ENCODE measurements at regions of chr10 and their contacts with region 1.

Region 1: DNA sequence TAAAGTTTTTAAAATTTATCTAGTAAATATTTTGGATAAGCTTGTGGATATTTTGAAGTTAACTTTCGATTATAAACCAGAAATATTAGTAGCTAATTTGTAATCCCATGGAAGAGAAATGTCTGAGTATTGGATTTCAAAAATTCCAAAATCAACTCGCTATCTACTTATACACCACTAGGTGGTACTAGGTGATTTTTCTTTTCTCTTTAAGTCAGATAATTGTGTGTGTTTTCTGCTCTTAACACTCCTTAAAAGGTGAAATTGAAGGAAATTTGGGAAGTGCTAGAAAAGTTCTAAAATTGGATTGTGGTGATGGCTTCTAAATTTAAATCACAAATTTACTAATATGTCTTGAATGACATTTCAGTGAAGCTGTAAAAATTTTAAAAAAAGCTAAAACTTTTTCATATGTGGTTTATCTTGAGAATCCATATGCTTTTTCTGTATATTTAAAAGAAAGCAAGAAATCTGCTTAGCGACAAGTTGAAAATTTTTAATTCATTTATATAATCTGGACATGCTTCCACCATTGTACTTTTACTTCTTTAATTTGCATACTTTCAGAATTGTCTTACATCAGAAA is 90.2 kb downstream of the IPMK start:
- DNase-seq: peak; percentile 47
- ATAC-seq: no peak; the same call in 1 of the 2 replicates
- H3K4me3 ChIP-seq: no peak overlapping the region
- H3K27ac ChIP-seq: no peak overlapping the region
- H3K4me1 ChIP-seq: no peaks in the 10 kb centered on the region
- H3K27me3 ChIP-seq: no peaks in the 10 kb centered on the region
- CTCF ChIP-seq: peak; percentile 74
- POLR2A ChIP-seq: no peak
- RAD21 ChIP-seq: peak; percentile 70

Region 2: DNA sequence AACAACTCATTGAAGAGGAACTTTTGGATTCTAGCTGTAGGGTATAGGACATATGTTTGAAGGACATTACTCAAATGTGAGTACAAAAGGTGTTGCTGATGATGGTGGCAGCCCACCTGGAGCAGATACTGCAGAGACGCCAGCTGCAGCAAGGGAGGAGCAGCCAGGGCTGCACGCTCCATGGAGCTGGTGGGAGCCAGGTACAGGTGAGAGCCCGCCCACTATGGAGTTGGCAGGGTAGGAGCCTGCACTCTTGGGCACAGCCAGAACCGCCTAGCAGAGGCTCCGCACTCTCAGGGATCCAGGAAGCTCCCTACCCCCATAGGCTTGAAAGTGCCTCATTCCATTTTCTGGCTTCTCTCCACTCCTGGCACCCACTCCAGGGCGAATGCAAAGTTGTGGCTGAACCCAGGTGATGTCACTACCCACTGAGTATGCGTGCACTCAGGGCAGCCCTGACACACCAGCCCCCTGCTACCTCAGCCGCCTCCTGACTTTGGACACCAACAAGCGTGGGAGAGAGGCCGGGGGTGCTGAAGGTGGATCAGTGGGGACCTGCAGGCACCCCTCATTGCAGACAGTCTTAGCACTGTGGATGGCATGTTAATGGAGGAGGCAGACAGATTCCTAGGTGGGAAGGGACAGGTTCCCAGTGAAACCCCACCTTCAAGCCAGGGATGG is 670.9 kb before region 1 on chr10:
- CTCF ChIA-PET with region 1: no interaction called
- POLR2A ChIA-PET with region 1: no interaction called
- dilution Hi-C with region 1: no loop called
- in situ Hi-C with region 1: no loop called
- intact Hi-C with region 1: no loop called
- DNase-seq: no peak
- ATAC-seq: no peak
- H3K4me3 ChIP-seq: no peak overlapping the region
- H3K27ac ChIP-seq: no peak overlapping the region
- H3K4me1 ChIP-seq: no peaks in the 10 kb centered on the region
- H3K27me3 ChIP-seq: no peaks in the 10 kb centered on the region
- CTCF ChIP-seq: no peak
- POLR2A ChIP-seq: no peak
- RAD21 ChIP-seq: no peak

Region 3: GRCh38 chr10:57769298-57769697 is 408.2 kb before region 1 on chr10:
- CTCF ChIA-PET with region 1: no interaction called
- POLR2A ChIA-PET with region 1: no interaction called
- dilution Hi-C with region 1: no loop called
- in situ Hi-C with region 1: no loop called
- intact Hi-C with region 1: no loop called
- DNase-seq: no peak
- ATAC-seq: no peak
- H3K4me3 ChIP-seq: no peak overlapping the region
- H3K27ac ChIP-seq: no peak overlapping the region
- H3K4me1 ChIP-seq: no peaks in the 10 kb centered on the region
- H3K27me3 ChIP-seq: no peaks in the 10 kb centered on the region
- CTCF ChIP-seq: no peak
- POLR2A ChIP-seq: no peak
- RAD21 ChIP-seq: no peak

Region 4: DNA sequence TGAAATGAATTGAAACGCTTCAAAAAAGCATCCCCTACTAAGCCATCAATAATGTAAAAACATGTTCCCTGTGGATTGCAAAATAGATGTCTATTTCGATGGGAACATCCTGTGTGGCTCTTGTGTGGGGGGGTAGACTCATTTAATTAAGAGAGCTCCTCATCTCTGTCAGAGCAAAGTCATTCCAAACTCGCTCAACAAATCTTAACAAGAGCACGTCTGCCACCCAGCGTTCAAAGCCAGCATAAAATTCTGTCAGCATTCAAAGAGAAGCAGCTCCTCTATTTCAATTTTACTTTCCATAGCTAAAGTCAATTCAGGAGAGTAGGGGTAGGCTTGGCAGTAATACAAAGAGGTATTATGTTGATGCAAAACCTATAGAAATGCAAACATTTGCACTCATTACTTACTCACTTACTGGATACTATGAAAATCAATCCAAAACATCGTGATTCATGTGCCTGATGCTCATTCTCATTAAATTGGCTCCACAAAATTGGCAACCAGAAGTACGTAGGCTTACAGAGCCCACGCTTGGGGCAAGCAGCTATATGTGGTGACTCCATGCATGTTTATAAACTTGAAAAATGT is 24.7 kb before region 1 on chr10:
- CTCF ChIA-PET with region 1: no interaction called
- POLR2A ChIA-PET with region 1: no interaction called
- dilution Hi-C with region 1: no loop called
- in situ Hi-C with region 1: no loop called
- intact Hi-C with region 1: loop called (anchors 1 kb)
- DNase-seq: peak; percentile 53
- ATAC-seq: peak; percentile 58; the same call in 1 of the 2 replicates
- H3K4me3 ChIP-seq: no peak overlapping the region
- H3K27ac ChIP-seq: no peak overlapping the region
- H3K4me1 ChIP-seq: no peaks in the 10 kb centered on the region
- H3K27me3 ChIP-seq: peaks cover 6% of the 10 kb centered on the region
- CTCF ChIP-seq: peak; percentile 60
- POLR2A ChIP-seq: no peak
- RAD21 ChIP-seq: peak; percentile 50

Region 5: GRCh38 chr10:58268870-58269605 is 91.6 kb after region 1 on chr10 and contains the start of gene CISD1:
- CTCF ChIA-PET with region 1: no interaction called
- POLR2A ChIA-PET with region 1: interaction called, 3 read pairs
- dilution Hi-C with region 1: no loop called
- in situ Hi-C with region 1: no loop called
- intact Hi-C with region 1: loop called (anchors 2 kb)
- DNase-seq: peak; percentile 100
- ATAC-seq: peak; percentile 80
- H3K4me3 ChIP-seq: peak within 1 kb of the TSS; percentile 64
- H3K27ac ChIP-seq: peak within 1 kb of the TSS; percentile 57
- H3K4me1 ChIP-seq: no peaks in the 10 kb centered on the region
- H3K27me3 ChIP-seq: no peaks in the 10 kb centered on the region
- CTCF ChIP-seq: no peak
- POLR2A ChIP-seq: peak; percentile 57; the same call in 1 of the 2 replicates
- RAD21 ChIP-seq: no peak
- total RNA-seq, gene CISD1: 25.8 and 34.6 TPM in 2 replicates

Region 6: GRCh38 chr10:58291538-58292174 is 114.2 kb after region 1 on chr10:
- CTCF ChIA-PET with region 1: interaction called, 41 read pairs
- POLR2A ChIA-PET with region 1: interaction called, 3 read pairs
- dilution Hi-C with region 1: no loop called
- in situ Hi-C with region 1: no loop called
- intact Hi-C with region 1: loop called (anchors 1 kb)
- DNase-seq: peak; percentile 71
- ATAC-seq: peak; percentile 86
- H3K4me3 ChIP-seq: no peak overlapping the region
- H3K27ac ChIP-seq: no peak overlapping the region
- H3K4me1 ChIP-seq: peaks cover 4% of the 10 kb centered on the region; the same call in 1 of the 2 replicates
- H3K27me3 ChIP-seq: no peaks in the 10 kb centered on the region
- CTCF ChIP-seq: peak; percentile 85
- POLR2A ChIP-seq: no peak
- RAD21 ChIP-seq: peak; percentile 95

Region 7: GRCh38 chr10:58299580-58299979 is 122.1 kb after region 1 on chr10:
- CTCF ChIA-PET with region 1: interaction called, 11 read pairs
- POLR2A ChIA-PET with region 1: interaction called, 3 read pairs
- dilution Hi-C with region 1: loop called (anchors 25 kb)
- in situ Hi-C with region 1: no loop called
- intact Hi-C with region 1: no loop called
- DNase-seq: peak; percentile 57
- ATAC-seq: peak; percentile 93
- H3K4me3 ChIP-seq: no peak overlapping the region
- H3K27ac ChIP-seq: no peak overlapping the region
- H3K4me1 ChIP-seq: no peaks in the 10 kb centered on the region
- H3K27me3 ChIP-seq: peaks cover 2% of the 10 kb centered on the region; the same call in 1 of the 2 replicates
- CTCF ChIP-seq: peak; percentile 72
- POLR2A ChIP-seq: no peak
- RAD21 ChIP-seq: peak; percentile 69

Region 8: GRCh38 chr10:58322072-58322834 is 144.8 kb after region 1 on chr10:
- CTCF ChIA-PET with region 1: interaction called, 5 read pairs
- POLR2A ChIA-PET with region 1: no interaction called
- dilution Hi-C with region 1: loop called (anchors 25 kb)
- in situ Hi-C with region 1: no loop called
- intact Hi-C with region 1: no loop called
- DNase-seq: peak; percentile 11
- ATAC-seq: peak; percentile 21
- H3K4me3 ChIP-seq: no peak overlapping the region
- H3K27ac ChIP-seq: no peak overlapping the region
- H3K4me1 ChIP-seq: no peaks in the 10 kb centered on the region
- H3K27me3 ChIP-seq: no peaks in the 10 kb centered on the region
- CTCF ChIP-seq: no peak
- POLR2A ChIP-seq: no peak
- RAD21 ChIP-seq: no peak

Region 9: GRCh38 chr10:58384999-58385783 is 207.7 kb after region 1 on chr10 and contains the start of gene TFAM:
- CTCF ChIA-PET with region 1: interaction called, 3 read pairs
- POLR2A ChIA-PET with region 1: no interaction called
- dilution Hi-C with region 1: no loop called
- in situ Hi-C with region 1: no loop called
- intact Hi-C with region 1: loop called (anchors 2 kb)
- DNase-seq: peak; percentile 85
- ATAC-seq: peak; percentile 96
- H3K4me3 ChIP-seq: peak within 1 kb of the TSS; percentile 83
- H3K27ac ChIP-seq: peak within 1 kb of the TSS; percentile 78
- H3K4me1 ChIP-seq: no peaks in the 10 kb centered on the region; the same call in 1 of the 2 replicates
- H3K27me3 ChIP-seq: no peaks in the 10 kb centered on the region
- CTCF ChIP-seq: peak; percentile 57
- POLR2A ChIP-seq: peak; percentile 78
- RAD21 ChIP-seq: peak; percentile 53
- total RNA-seq, gene TFAM: 16.7 and 26.1 TPM in 2 replicates